IMR-90 (cell line): ENCODE measurements at regions of chr9 and their contacts with region 1.

Region 1: DNA sequence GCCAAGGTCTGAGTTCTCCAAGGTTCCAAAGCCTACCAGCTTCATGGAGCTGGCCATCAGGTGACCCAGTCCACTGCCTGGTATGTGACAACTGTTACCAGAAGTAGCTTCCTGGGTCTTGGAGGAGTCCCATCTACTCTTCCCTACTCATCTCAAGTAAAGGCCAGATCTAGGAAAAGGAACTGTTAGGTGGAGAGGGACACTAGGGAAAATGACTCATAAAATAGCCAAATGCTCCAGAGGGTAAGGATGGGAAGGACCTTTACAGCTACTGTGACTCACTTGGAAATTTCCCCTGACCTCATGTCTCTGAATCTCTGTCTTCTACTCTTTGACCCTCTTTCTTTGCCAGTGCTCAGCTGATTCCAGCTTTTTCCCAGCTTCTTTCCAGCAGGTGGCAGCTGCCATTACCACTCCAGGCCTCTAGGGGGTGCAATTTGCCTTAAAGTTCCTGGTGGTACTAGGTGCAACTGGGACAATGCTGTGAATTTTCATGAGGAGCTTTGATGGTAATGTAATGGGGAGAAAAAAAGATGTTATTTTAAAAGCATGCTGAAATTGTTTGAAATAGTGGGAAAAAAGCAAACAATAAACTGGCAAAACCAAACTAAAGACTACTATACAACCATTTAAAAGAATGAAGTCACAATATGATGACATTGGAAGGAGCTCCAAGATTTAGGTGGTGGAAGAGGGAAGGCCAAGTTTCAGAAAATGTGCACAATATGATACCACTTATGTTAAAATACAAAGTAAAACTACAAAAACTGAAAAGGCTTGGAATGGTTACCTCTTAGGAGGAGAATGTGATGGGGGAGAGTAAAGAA is 27.1 kb upstream of the MYORG start:
- DNase-seq: peak; percentile 68
- ATAC-seq: peak; percentile 90
- H3K4me3 ChIP-seq: no peak overlapping the region
- H3K27ac ChIP-seq: no peak overlapping the region
- H3K4me1 ChIP-seq: no peaks in the 10 kb centered on the region; the same call in 1 of the 2 replicates
- H3K27me3 ChIP-seq: no peaks in the 10 kb centered on the region
- CTCF ChIP-seq: peak; percentile 97
- POLR2A ChIP-seq: no peak
- RAD21 ChIP-seq: peak; percentile 84

Region 2: DNA sequence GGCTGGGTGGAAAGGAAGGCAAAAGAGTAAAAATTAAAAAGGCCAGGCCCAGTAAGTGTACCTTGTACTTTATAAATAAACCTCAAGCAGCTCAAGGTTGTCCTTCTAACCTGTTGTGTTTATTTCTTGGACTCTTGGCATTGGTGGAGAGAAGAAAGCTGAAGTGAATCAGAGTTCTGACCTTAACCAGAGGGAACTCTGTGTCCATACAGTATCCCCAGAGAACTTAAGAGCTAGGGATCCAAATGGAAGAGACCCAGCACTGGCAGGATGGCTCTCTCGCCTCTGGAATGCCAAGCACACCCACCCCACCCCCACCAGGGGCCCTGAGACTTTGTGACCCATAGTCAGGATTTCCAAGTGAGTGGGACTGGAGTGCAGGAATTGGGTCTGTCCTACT is 60.2 kb before region 1 on chr9:
- CTCF ChIA-PET with region 1: no interaction called
- POLR2A ChIA-PET with region 1: no interaction called
- dilution Hi-C with region 1: no loop called
- in situ Hi-C with region 1: no loop called
- intact Hi-C with region 1: no loop called
- DNase-seq: no peak
- ATAC-seq: no peak
- H3K4me3 ChIP-seq: no peak overlapping the region
- H3K27ac ChIP-seq: no peak overlapping the region
- H3K4me1 ChIP-seq: no peaks in the 10 kb centered on the region
- H3K27me3 ChIP-seq: no peaks in the 10 kb centered on the region
- CTCF ChIP-seq: no peak
- POLR2A ChIP-seq: no peak
- RAD21 ChIP-seq: no peak

Region 3: DNA sequence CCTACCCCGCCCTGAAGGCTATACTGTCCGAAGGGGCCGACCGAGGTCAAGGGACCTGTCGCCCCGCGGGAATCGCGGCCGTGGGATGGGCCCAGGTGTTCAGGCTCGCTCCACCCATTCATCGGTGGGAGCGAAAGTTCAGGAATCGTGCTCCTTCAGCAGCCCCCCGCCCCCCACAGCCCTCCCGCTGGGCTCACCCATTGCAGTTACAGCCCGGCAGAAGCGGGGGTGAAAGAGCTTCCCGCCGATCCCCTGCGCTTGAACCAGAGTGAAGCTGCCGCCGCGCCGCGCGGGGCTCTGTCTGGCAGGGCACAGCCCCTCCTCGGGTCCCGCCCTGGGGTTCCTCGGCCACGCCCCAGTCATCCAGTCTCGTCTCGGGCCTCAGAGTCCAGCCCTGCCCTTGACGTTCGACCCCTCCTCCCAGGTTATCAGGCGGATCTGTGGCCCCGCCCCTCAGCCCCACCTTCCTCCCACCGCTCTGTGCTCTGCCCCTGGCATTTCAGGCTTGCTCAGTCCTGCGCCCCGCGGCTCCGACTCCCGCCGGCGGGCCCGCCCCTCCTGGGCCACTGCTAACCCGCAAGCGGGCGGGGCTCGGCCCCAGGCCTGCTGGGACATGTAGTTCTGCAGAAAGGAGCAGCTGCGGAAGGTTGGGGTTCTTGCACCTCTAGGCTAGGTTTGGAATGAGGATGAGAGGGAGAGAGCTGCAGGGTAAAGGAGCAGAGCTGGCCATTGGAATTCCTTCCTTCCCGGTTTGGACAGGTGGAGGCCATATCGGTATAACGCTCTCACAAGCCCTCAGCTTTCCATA is 27.0 kb before region 1 on chr9 and contains the start of gene MYORG:
- CTCF ChIA-PET with region 1: no interaction called
- POLR2A ChIA-PET with region 1: no interaction called
- dilution Hi-C with region 1: no loop called
- in situ Hi-C with region 1: no loop called
- intact Hi-C with region 1: no loop called
- DNase-seq: peak; percentile 65
- ATAC-seq: peak; percentile 84
- H3K4me3 ChIP-seq: peak within 1 kb of the TSS; percentile 54
- H3K27ac ChIP-seq: no peak within 1 kb of the TSS
- H3K4me1 ChIP-seq: peaks cover 8% of the 10 kb centered on the region
- H3K27me3 ChIP-seq: peaks cover 17% of the 10 kb centered on the region; the same call in 1 of the 2 replicates
- CTCF ChIP-seq: no peak
- POLR2A ChIP-seq: no peak
- RAD21 ChIP-seq: no peak
- total RNA-seq, gene MYORG: 0.36 and 0.56 TPM in 2 replicates

Region 4: GRCh38 chr9:34500623-34501267 is 97.0 kb after region 1 on chr9:
- CTCF ChIA-PET with region 1: interaction called, 13 read pairs
- POLR2A ChIA-PET with region 1: no interaction called
- dilution Hi-C with region 1: no loop called
- in situ Hi-C with region 1: no loop called
- intact Hi-C with region 1: loop called (anchors 1 kb)
- DNase-seq: peak; percentile 19
- ATAC-seq: peak; percentile 80
- H3K4me3 ChIP-seq: no peak overlapping the region
- H3K27ac ChIP-seq: no peak overlapping the region
- H3K4me1 ChIP-seq: no peaks in the 10 kb centered on the region; the same call in 1 of the 2 replicates
- H3K27me3 ChIP-seq: peaks cover 53% of the 10 kb centered on the region
- CTCF ChIP-seq: peak; percentile 89
- POLR2A ChIP-seq: no peak
- RAD21 ChIP-seq: peak; percentile 84

Region 5: GRCh38 chr9:34591248-34591916 is 187.6 kb after region 1 on chr9:
- CTCF ChIA-PET with region 1: interaction called, 11 read pairs
- POLR2A ChIA-PET with region 1: interaction called, 5 read pairs
- dilution Hi-C with region 1: no loop called
- in situ Hi-C with region 1: no loop called
- intact Hi-C with region 1: no loop called
- DNase-seq: peak; percentile 60
- ATAC-seq: peak; percentile 97
- H3K4me3 ChIP-seq: no peak overlapping the region
- H3K27ac ChIP-seq: no peak overlapping the region
- H3K4me1 ChIP-seq: no peaks in the 10 kb centered on the region; the same call in 1 of the 2 replicates
- H3K27me3 ChIP-seq: peaks cover 85% of the 10 kb centered on the region
- CTCF ChIP-seq: peak; percentile 93
- POLR2A ChIP-seq: no peak
- RAD21 ChIP-seq: peak; percentile 92